Endothelial cell of umbilical vein (primary cell): ENCODE measurements at regions of chr19 and their contacts with region 1.

Region 1: GRCh38 chr19:37334179-37335071 is 36.5 kb upstream of the ZNF527 start:
- DNase-seq: peak; percentile 94
- H3K4me3 ChIP-seq: peak overlapping the region; percentile 65 to 83 (median 78)
- H3K27ac ChIP-seq: peak overlapping the region; percentile 74
- H3K4me1 ChIP-seq: peaks cover 19% of the 10 kb centered on the region
- H3K27me3 ChIP-seq: no peaks in the 10 kb centered on the region
- CTCF ChIP-seq: no peak
- POLR2A ChIP-seq: peak; percentile 66

Region 2: GRCh38 chr19:37362733-37363132 is 28.3 kb after region 1 on chr19:
- CTCF ChIA-PET with region 1: interaction called, 4 read pairs
- POLR2A ChIA-PET with region 1: no interaction called
- dilution Hi-C with region 1: no loop called
- intact Hi-C with region 1: loop called (anchors 2 kb)
- DNase-seq: peak; percentile 12
- H3K4me3 ChIP-seq: no peak overlapping the region
- H3K27ac ChIP-seq: peak overlapping the region; percentile 84
- H3K4me1 ChIP-seq: peaks cover 16% of the 10 kb centered on the region
- H3K27me3 ChIP-seq: no peaks in the 10 kb centered on the region
- CTCF ChIP-seq: peak in 1 of 2 donors; percentile 10
- POLR2A ChIP-seq: no peak

Region 3: DNA sequence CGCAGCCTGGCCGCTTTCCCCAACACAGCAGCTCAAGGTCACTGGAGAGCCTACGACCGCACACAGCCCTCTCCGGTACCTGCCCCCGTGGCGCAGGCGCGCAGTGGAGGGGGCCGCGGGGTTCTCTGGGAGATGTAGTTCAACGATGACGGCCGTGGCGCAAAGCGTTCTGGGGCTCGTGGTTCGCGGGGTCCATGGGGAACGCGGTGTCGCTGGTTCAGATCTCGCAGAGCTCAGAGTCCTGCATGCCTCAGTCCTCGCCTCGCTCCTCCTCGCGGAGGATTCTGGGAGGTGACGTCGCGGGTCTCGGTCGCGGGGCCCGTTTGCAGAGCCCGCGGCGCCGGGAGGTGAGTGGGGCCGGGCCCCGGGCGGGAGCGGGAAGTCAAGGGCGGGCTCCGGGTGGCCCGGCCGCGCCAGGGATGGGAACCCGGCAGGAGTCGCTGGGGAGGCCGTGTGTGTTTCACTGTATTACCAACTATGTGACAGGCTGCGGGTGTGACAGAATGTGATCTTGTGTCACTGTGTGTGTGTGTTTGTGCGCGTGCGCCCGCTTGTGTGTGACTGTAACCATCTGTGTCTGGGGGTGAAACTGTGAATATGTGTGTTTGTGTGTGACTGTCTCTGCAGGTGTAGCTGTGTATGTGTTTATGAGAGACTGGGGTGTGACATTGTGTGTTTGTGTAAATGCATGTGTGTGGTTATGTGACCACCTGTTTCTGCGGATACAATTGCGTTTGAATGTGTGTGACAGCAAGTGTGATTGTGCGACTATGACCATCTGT is 36.6 kb after region 1 on chr19 and contains the start of gene ZNF527:
- CTCF ChIA-PET with region 1: interaction called, 5 read pairs
- POLR2A ChIA-PET with region 1: interaction called, 3 read pairs
- dilution Hi-C with region 1: no loop called
- intact Hi-C with region 1: loop called (anchors 1 kb)
- DNase-seq: peak; percentile 98
- H3K4me3 ChIP-seq: peak within 1 kb of the TSS; percentile 13 to 89 (median 72)
- H3K27ac ChIP-seq: peak within 1 kb of the TSS; percentile 14
- H3K4me1 ChIP-seq: no peaks in the 10 kb centered on the region
- H3K27me3 ChIP-seq: no peaks in the 10 kb centered on the region
- CTCF ChIP-seq: no peak
- POLR2A ChIP-seq: peak; percentile 74
- total RNA-seq, gene ZNF527: 3.4 and 3.6 TPM in 2 replicates

Region 4: DNA sequence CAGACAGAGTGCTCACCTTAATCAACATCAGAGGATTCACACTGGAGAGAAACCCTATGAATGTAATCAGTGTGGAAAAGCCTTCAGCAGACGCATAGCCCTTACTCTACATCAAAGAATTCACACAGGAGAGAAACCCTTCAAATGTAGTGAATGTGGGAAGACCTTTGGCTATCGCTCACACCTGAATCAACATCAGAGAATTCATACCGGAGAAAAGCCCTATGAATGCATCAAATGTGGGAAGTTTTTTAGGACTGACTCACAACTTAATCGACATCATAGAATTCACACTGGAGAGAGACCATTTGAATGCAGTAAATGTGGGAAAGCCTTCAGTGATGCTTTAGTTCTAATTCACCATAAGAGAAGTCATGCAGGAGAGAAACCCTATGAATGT is 54.8 kb after region 1 on chr19:
- CTCF ChIA-PET with region 1: no interaction called
- POLR2A ChIA-PET with region 1: no interaction called
- dilution Hi-C with region 1: no loop called
- intact Hi-C with region 1: no loop called
- DNase-seq: no peak
- H3K4me3 ChIP-seq: no peak overlapping the region
- H3K27ac ChIP-seq: no peak overlapping the region
- H3K4me1 ChIP-seq: no peaks in the 10 kb centered on the region
- H3K27me3 ChIP-seq: no peaks in the 10 kb centered on the region
- CTCF ChIP-seq: no peak
- POLR2A ChIP-seq: no peak